Common myeloid progenitor, CD34-positive (primary cell): ENCODE measurements at regions of chr1 and their contacts with region 1.

Region 1: DNA sequence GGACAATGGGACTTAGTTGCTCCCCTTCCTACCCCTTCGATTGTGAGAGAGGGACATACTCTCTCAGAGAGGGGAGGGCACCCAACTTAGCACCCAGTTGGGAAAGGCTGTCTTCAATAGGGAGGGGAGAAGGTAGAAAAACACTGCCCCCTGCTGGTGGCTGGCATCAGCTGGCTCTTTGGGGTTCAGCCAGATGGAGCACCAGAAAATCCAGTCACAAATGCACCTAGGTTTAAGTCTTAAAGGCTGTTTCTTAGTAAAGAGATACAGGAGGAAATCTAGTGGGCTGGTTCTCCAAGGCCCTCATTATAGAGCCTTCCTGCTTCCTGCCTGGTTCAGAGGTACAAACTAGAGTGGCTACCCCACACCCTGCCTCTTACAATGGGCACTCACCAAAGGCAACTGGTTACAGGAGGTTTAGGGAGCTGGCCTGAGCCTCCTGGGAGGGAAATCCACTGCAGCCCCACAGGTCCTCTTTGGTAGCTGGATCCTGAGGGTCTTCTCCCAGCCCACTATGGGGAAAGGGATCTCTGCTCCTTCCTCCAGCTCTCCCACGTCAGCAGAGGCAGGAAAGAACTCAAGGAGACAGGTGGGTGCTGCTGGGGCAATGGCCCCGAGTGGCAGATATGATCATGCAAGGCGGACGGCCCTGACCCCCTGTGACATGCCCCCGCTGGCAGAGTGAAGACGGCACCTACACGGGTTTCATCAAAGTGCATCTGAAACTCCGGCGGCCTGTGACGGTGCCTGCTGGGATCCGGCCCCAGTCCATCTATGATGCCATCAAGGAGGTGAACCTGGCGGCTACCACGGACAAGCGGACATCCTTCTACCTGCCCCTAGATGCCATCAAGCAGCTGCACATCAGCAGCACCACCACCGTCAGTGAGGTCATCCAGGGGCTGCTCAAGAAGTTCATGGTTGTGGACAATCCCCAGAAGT is 28.3 kb downstream of the EIF2D start:
- DNase-seq: peak; percentile 69 to 79 (median 72)
- H3K4me3 ChIP-seq: no peak overlapping the region
- H3K27ac ChIP-seq: no peak overlapping the region
- H3K4me1 ChIP-seq: peaks cover 19 to 43% (median 38%) of the 10 kb centered on the region in 4 experiments
- H3K27me3 ChIP-seq: no peaks in the 10 kb centered on the region

Region 2: GRCh38 chr1:206461602-206462455 is 122.1 kb before region 1 on chr1:
- CTCF ChIA-PET with region 1: interaction called, 14 read pairs
- POLR2A ChIA-PET with region 1: no interaction called
- DNase-seq: peak; percentile 60 to 81 (median 75)
- H3K4me3 ChIP-seq: no peak overlapping the region
- H3K27ac ChIP-seq: no peak overlapping the region
- H3K4me1 ChIP-seq: peaks cover 3 to 46% (median 20%) of the 10 kb centered on the region in 4 experiments
- H3K27me3 ChIP-seq: no peaks in the 10 kb centered on the region

Region 3: GRCh38 chr1:206489980-206490770 is 93.8 kb before region 1 on chr1:
- CTCF ChIA-PET with region 1: interaction called, 62 read pairs
- POLR2A ChIA-PET with region 1: interaction called, 3 read pairs
- DNase-seq: peak; percentile 60 to 78 (median 70)
- H3K4me3 ChIP-seq: no peak overlapping the region
- H3K27ac ChIP-seq: no peak overlapping the region
- H3K4me1 ChIP-seq: peaks cover 0 to 6% (median 3%) of the 10 kb centered on the region in 4 experiments
- H3K27me3 ChIP-seq: no peaks in the 10 kb centered on the region

Region 4: DNA sequence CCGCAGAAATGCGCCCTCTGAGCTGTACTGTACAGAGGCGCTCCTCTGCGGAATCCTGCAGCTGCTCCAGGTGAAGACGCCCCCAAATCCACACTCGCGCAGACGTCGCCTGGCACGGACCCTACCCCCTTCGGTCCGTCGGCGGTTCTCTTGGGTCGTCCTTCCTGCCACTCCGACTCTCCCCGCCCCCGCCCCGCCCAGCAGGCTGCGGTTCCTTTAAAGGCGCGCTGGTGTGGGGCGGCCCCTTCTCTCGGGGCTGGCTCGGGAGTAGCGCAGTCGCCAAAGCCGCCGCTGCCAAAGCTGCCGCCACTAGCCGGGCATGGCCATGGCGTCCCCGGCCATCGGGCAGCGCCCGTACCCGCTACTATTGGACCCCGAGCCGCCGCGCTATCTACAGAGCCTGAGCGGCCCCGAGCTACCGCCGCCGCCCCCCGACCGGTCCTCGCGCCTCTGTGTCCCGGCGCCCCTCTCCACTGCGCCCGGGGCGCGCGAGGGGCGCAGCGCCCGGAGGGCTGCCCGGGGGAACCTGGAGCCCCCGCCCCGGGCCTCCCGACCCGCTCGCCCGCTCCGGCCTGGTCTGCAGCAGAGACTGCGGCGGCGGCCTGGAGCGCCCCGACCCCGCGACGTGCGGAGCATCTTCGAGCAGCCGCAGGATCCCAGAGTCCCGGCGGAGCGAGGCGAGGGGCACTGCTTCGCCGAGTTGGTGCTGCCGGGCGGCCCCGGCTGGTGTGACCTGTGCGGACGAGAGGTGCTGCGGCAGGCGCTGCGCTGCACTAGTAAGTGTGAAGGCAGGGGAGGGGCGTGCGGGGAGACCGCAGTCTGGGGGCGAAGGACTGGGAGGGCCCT is 76.5 kb before region 1 on chr1 and contains the start of gene RASSF5:
- CTCF ChIA-PET with region 1: interaction called, 23 read pairs
- POLR2A ChIA-PET with region 1: no interaction called
- DNase-seq: peak; percentile 40 to 77 (median 68)
- H3K4me3 ChIP-seq: peak within 1 kb of the TSS; percentile 42 to 76 (median 61)
- H3K27ac ChIP-seq: no peak within 1 kb of the TSS
- H3K4me1 ChIP-seq: peaks cover 0 to 38% (median 31%) of the 10 kb centered on the region in 4 experiments
- H3K27me3 ChIP-seq: peaks cover 0 to 51% (median 20%) of the 10 kb centered on the region in 5 experiments

Region 5: GRCh38 chr1:206544562-206545257 is 39.3 kb before region 1 on chr1:
- CTCF ChIA-PET with region 1: interaction called, 395 read pairs
- POLR2A ChIA-PET with region 1: interaction called, 10 read pairs
- DNase-seq: peak; percentile 56 to 68 (median 61)
- H3K4me3 ChIP-seq: no peak overlapping the region
- H3K27ac ChIP-seq: no peak overlapping the region
- H3K4me1 ChIP-seq: peaks cover 0 to 5% (median 2%) of the 10 kb centered on the region in 4 experiments
- H3K27me3 ChIP-seq: no peaks in the 10 kb centered on the region

Region 6: DNA sequence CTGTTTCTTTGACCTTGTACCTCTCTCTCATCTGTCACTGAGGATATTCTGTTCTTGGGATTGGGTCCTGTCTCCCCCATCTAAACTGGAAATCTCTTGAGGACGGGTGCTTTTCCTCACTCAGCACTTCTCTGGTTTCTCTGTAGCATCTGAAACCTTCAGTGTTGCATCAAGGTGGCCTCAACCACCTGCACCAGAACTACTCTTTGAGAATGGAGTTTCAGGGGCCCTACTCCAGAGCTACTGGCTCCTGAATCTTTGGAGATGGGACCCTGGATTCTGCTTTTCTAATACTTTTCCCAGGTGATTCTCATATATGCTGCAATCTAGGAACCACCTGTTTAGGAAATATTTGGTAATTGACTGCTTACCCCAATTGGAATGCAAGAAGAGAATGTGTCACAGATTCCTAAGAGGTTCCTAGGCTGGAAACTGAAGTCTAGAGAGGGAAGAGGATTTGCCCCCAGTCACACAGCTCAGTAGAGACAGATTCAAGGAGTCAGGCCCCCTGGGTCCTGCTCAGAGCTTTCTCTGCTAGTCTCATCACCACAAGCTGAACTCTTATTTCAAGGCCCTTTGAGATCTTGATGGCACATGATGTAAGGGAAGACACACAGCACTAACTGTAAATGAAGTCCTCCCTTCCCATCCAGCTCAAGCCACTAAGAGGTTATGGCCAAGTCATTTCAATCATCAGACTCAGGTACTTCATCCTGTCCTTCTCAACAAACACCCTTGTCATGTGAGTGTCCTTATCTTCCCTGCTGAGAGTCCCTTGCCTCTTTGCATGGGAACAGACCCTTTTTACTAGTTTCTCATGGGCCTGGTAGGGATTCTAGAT is 20.4 kb before region 1 on chr1:
- CTCF ChIA-PET with region 1: interaction called, 395 read pairs
- POLR2A ChIA-PET with region 1: interaction called, 12 read pairs
- DNase-seq: no peak
- H3K4me3 ChIP-seq: peak overlapping the region in 3 of 7 experiments; percentile 8 to 35 (median 17)
- H3K27ac ChIP-seq: no peak overlapping the region
- H3K4me1 ChIP-seq: peaks cover 41 to 75% (median 67%) of the 10 kb centered on the region in 4 experiments
- H3K27me3 ChIP-seq: no peaks in the 10 kb centered on the region